ENCODE measurements at regions of chr14 and their contacts with region 1.

Region 1: GRCh38 chr14:58501214-58501816 is 73.8 kb downstream of the KIAA0586 start:
- H3K4me3 ChIP-seq: no peak overlapping the region
- H3K27ac ChIP-seq: no peak overlapping the region
- H3K4me1 ChIP-seq: no peaks in the 10 kb centered on the region
- CTCF ChIP-seq: peak; percentile 16; the same call in 1 of the 2 replicates

Region 2: DNA sequence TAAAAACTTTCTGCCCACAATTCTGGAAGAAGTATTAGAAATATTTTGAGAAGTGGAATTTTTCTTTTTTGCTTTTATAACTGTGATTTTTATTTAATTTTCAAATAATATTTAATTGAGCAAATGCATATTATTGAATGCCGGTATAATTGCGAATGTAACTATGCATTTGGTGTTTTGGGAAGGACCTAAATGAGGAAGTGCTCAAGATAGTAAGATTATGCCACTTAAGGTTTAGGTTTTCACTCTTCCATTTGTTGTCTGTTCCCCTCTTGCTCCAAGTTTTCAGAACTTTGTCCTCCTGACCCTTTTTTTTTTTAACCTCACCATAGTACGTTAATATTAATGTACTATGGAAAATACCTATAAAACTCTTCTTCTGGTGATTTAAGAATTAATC is 12.0 kb after region 1 on chr14:
- CTCF ChIA-PET with region 1: interaction called, 15 read pairs
- POLR2A ChIA-PET with region 1: no interaction called
- H3K4me3 ChIP-seq: no peak overlapping the region
- H3K27ac ChIP-seq: no peak overlapping the region
- H3K4me1 ChIP-seq: no peaks in the 10 kb centered on the region
- CTCF ChIP-seq: no peak

Region 3: DNA sequence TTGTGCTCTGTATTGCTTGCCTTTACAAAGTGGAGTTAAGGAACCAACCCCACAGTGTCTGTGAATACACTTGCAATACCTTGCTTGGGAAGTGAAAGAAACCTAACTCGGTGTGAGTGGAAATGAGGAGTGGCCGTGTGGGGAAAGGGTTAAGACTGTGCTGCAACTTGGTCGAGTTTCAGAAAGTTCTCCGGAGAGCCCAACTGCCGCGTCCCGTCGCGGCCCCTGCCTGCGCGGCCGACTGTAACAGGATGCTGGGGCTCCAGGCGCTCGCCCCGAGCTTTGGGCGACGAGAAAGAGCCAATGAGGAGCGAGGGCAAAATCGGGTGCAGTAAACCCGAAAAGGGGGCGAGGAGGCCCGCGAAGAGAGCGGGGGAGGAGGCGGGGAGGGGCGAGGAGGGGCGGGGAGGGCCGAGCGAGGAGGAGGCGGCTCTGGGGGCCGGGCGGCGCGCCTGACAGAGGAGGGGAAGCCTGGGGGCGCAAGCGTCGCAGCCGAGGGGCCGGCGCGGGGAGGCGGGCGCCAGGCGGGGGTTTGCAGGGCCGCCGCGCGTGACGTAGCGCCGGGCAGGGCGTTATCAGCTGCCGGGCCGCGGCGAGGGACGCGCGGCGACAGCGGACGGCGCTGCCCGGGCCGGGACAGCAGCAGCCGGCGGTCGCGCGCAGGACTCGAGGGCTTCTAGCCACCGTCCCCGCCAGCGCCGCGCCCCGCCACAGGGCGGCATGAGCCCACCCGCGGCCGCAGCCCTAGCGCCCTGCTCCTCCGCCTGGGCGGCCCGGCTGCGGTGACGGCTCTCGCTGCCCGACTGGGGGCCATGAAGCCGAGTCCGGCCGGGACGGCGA is 136.3 kb after region 1 on chr14 and contains the start of gene DACT1:
- CTCF ChIA-PET with region 1: interaction called, 31 read pairs
- POLR2A ChIA-PET with region 1: no interaction called
- H3K4me3 ChIP-seq: peak within 1 kb of the TSS; percentile 71
- H3K27ac ChIP-seq: peak within 1 kb of the TSS; percentile 100
- H3K4me1 ChIP-seq: peaks cover 24% of the 10 kb centered on the region
- CTCF ChIP-seq: no peak

Region 4: DNA sequence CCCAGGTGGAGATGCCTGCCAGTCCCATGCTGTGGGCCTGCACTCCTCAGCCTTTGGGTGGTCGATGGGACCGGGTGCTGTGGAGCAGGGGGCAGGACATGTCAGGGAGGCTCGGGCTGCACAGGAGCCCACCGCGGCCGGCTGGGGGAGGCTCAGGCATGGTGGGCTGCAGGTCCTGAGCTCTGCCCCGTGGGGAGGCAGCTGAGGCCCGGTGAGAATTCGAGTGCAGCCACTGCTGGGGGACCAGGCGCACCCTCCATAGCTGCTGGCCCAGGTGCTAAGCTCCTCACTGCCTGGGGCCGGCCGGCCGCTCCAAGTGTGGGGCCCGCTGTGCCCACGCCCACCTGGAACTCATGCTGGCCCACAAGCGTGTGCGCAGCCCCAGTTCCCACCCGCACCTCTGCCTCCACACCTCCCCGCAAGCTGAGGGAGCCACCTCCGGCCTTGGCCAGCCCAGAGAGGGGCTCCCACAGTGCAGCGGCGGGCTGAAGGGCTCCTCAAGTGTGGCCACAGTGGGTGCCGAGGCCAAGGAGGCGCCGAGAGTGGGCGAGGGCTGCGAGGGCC is 186.0 kb after region 1 on chr14:
- CTCF ChIA-PET with region 1: no interaction called
- POLR2A ChIA-PET with region 1: no interaction called
- H3K4me3 ChIP-seq: no peak overlapping the region
- H3K27ac ChIP-seq: no peak overlapping the region
- H3K4me1 ChIP-seq: peaks cover 9% of the 10 kb centered on the region
- CTCF ChIP-seq: no peak

Region 5: GRCh38 chr14:59028476-59029202 is 527.3 kb after region 1 on chr14:
- CTCF ChIA-PET with region 1: interaction called, 12 read pairs
- POLR2A ChIA-PET with region 1: no interaction called
- H3K4me3 ChIP-seq: no peak overlapping the region
- H3K27ac ChIP-seq: no peak overlapping the region
- H3K4me1 ChIP-seq: peaks cover 3% of the 10 kb centered on the region; the same call in 1 of the 2 replicates
- CTCF ChIP-seq: peak; percentile 56; the same call in 1 of the 2 replicates

Region 6: GRCh38 chr14:59055439-59056045 is 554.2 kb after region 1 on chr14:
- CTCF ChIA-PET with region 1: interaction called, 29 read pairs
- POLR2A ChIA-PET with region 1: no interaction called
- H3K4me3 ChIP-seq: no peak overlapping the region
- H3K27ac ChIP-seq: no peak overlapping the region
- H3K4me1 ChIP-seq: no peaks in the 10 kb centered on the region
- CTCF ChIP-seq: no peak

Region 7: GRCh38 chr14:59126710-59127432 is 625.6 kb after region 1 on chr14:
- CTCF ChIA-PET with region 1: interaction called, 55 read pairs
- POLR2A ChIA-PET with region 1: no interaction called
- H3K4me3 ChIP-seq: no peak overlapping the region
- H3K27ac ChIP-seq: no peak overlapping the region
- H3K4me1 ChIP-seq: peaks cover under 1% of the 10 kb centered on the region; the same call in 1 of the 2 replicates
- CTCF ChIP-seq: 0 out of 2 replicates have a peak, but pooled peaks have one; percentile 24

Measured in HEK293 (cell line).